GM18951 (cell line): ENCODE measurements at regions of chr7 and their contacts with region 1.

Region 1: DNA sequence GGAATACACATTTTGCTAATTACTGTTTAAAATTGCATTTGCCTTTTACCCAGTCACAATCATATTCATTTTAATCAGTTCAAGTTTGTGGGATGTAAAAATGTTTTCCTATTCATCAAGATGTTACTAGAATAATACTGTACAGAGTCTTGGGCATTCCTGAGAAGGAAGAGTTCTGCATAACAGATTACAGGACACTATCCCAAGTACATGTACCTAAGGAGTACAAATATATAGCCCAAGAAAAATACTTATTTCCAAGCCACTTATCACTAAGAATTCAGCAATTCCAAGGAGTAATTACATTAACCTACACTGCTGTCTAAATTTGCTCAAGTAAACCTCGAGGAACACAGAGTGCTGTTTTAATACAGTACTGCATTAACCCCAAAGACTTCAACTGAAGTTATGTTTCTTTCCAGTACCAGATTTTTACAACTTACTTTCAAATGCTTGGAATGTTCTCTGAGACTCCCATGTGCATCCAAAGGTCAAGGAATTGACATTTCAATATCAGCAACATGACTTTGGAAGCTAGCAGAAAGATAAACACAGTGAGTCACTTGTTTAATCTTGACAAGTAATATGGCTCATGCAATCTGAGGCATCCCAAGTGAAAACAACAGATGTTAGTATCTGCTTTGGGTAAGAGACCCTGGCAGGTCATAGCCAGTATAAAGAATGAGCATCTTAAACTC is 125.4 kb upstream of the BET1 start:
- POLR2A ChIP-seq: no peak

Region 2: DNA sequence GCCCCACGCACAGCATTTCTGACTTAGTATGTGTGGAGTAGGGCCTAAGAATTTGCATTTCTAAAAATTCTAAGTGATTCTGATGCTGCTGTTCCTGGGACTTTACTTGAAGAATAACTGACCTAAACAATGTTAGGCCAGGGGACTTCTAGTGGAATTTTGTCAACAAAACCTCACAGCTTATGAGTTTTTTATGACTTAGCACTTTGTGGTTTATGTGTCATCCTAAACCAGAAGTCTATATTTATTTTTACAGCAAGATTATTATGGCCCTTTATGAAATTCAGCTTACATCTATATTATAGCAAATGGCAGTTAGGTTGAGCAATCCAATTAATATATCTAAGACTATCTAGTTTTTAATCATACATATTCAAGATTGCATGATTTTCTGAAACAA is 100.8 kb before region 1 on chr7:
- in situ Hi-C with region 1: no loop called
- POLR2A ChIP-seq: no peak

Region 3: GRCh38 chr7:94239661-94240234 is 110.2 kb after region 1 on chr7:
- in situ Hi-C with region 1: loop called (anchors 10 kb)
- POLR2A ChIP-seq: no peak

Region 4: DNA sequence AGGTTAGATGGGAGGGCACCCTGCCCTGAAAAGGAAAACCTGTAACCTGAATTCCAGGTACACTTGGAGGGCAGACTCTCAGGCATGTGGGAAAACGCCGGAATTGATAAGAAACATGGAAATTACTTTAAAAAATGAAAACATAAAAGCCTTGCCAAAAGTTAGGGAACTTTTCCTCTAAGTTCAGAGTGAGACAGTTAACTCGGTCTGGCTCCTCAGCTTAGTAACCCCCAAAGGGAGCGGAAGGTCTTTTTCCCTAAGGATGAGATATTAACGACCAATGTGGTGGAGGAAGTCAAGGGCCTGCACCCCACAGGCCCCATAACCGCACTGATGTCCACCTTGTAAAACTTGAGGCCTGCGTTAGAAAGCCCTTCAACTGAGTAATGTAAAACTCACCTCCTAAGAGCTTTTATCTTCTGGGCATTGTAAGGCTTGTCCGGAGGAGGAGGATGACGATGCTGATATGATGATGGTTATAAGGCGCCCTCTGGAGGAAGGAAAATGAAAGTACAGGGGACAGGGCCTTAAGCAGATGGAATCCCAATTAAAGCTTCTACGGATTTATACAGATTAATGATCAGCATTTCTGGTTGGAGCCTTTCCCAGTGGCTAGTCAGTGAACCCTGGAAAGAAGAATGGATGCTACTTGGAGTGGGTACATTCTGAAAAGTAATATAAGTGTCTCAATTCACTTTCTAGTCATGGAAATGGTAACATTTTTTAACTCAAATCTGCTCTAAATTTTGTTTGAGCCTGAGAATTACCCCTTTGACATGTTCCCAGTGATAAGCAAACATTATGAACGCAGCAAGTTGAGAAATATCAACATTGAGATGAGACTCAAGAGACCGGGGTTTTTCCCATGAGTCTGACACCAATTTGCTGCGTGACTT is 265.8 kb after region 1 on chr7:
- in situ Hi-C with region 1: loop called (anchors 25 kb)
- POLR2A ChIP-seq: no peak